A549 (cell line): ENCODE measurements at regions of chr1 and their contacts with region 1.

Region 1: DNA sequence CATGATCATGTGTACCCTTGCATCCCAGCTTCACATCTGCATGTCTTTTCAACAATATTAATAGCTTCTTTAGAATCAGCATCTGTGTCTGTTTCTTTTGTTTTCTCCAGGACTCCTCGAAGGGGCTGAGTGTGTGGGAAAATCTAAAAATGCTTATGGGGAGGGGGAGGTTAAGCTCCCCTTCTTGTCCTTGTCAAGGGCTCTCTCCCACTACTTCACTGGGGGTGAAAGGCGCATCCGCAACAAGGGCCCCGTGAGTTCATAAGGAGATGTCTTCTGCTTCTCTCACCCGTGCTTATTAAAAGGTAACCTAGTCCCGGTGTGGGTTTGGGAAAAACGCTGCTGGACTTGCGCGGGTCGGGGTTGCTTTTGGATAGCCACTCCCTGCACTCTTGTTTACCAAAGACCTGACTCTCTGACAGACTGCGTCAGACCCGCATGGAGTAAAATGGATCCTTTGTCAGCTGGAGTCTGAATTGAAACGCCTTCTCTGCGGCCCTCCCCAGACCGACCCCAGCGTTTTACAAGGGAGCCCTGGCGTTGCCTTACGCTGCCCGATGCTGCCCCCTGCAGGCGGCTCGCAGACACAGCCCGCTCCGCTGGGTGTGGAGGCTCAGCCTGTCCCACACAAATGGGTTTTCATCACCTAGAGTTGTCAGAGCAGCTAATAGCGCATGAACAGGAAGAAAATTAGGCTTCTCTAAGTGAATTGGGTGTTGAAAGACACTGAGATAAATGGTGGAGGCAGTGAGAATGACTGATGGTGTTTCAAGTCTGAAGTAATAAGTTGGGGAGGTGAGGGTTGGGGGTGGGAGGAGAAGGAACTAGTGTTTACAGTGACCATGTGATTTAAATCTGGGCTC is 53.8 kb downstream of the IER5 start:
- DNase-seq: peak; percentile 81 to 92
- ATAC-seq: peak; percentile 89 to 96
- H3K4me3 ChIP-seq: peak overlapping the region; percentile 19
- H3K27ac ChIP-seq: peak overlapping the region; percentile 77 to 92
- H3K4me1 ChIP-seq: peaks cover 36% of the 10 kb centered on the region
- CTCF ChIP-seq: peak; percentile 96
- EP300 ChIP-seq: no peak
- POLR2A ChIP-seq: no peak
- RAD21 ChIP-seq: peak; percentile 100

Region 2: GRCh38 chr1:180899262-180899661 is 243.1 kb before region 1 on chr1:
- CTCF ChIA-PET with region 1: interaction called, 19 read pairs
- POLR2A ChIA-PET with region 1: no interaction called
- DNase-seq: no peak
- ATAC-seq: no peak
- H3K4me3 ChIP-seq: no peak overlapping the region
- H3K27ac ChIP-seq: no peak overlapping the region
- H3K4me1 ChIP-seq: no peaks in the 10 kb centered on the region
- CTCF ChIP-seq: no peak
- EP300 ChIP-seq: no peak
- POLR2A ChIP-seq: no peak
- RAD21 ChIP-seq: no peak

Region 3: DNA sequence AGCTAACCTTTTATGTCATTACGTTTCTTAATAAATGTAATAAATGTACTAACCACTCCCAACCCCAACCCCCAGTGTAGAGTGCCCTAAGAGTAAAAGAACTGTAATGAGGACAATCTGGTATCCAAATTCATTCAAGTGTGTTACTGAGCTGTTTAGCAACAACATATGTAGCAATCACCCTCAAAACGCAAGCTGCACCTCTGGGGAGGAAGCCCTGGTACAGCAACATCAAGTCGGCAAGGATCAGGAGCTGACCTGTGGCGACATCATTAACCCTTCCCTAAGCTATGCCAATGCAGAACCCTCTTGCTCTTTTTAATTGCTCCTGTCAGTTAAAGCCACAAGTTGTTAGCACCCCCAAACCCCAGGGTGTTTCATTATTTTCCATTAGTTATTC is 166.8 kb before region 1 on chr1:
- CTCF ChIA-PET with region 1: interaction called, 26 read pairs
- POLR2A ChIA-PET with region 1: no interaction called
- DNase-seq: no peak
- ATAC-seq: no peak
- H3K4me3 ChIP-seq: no peak overlapping the region
- H3K27ac ChIP-seq: no peak overlapping the region
- H3K4me1 ChIP-seq: no peaks in the 10 kb centered on the region
- CTCF ChIP-seq: no peak
- EP300 ChIP-seq: no peak
- POLR2A ChIP-seq: no peak
- RAD21 ChIP-seq: no peak

Region 4: DNA sequence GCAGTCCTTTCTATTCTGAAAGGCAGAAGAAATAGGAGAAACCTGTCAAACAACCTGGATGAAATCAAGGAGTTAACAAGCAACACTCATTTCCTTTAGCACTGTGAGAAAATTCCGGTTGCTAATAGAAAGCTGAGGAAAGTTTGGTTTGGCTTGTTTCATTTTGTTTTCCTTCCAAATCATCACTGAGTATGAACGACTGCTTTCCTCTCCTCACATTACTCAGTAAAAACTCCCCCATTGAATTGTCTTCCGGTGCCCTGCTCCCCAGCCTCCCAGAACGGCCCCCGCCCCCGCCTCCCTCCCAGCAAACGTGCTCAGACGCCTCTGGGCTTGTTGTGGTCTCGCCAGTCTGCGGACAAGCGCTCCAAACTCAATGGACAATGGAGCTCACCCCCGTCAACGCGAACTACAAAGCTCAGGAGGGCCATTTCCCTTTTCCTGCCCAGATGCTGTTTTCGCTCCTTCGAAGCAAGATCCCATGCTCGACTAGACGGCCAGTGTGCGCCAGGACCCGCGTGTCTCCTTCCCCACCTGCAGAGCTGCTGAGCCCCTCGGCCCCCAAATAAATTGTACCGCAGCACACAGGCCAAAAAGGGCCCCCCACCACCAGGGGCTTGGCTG is 120.4 kb before region 1 on chr1:
- CTCF ChIA-PET with region 1: interaction called, 19 read pairs
- POLR2A ChIA-PET with region 1: no interaction called
- DNase-seq: peak; percentile 39 to 63
- ATAC-seq: peak; percentile 48 to 59
- H3K4me3 ChIP-seq: peak overlapping the region; percentile 76
- H3K27ac ChIP-seq: peak overlapping the region; percentile 88 to 98
- H3K4me1 ChIP-seq: peaks cover 11% of the 10 kb centered on the region; the same call in 2 of the 3 replicates
- CTCF ChIP-seq: no peak
- EP300 ChIP-seq: no peak
- POLR2A ChIP-seq: no peak
- RAD21 ChIP-seq: no peak

Region 5: GRCh38 chr1:181088079-181089016 is 54.0 kb before region 1 on chr1 and contains the start of gene IER5:
- CTCF ChIA-PET with region 1: interaction called, 774 read pairs
- POLR2A ChIA-PET with region 1: interaction called, 16 read pairs
- DNase-seq: peak; percentile 86 to 98
- ATAC-seq: peak; percentile 80 to 89
- H3K4me3 ChIP-seq: peak within 1 kb of the TSS; percentile 91
- H3K27ac ChIP-seq: peak within 1 kb of the TSS; percentile 80 to 97
- H3K4me1 ChIP-seq: peaks cover 56% of the 10 kb centered on the region
- CTCF ChIP-seq: no peak
- EP300 ChIP-seq: no peak; a peak in 1 of 5 replicates
- POLR2A ChIP-seq: peak; percentile 100
- RAD21 ChIP-seq: peak; percentile 40
- polyA plus RNA-seq, gene IER5: 21.2 and 26.8 TPM in 2 replicates

Region 6: DNA sequence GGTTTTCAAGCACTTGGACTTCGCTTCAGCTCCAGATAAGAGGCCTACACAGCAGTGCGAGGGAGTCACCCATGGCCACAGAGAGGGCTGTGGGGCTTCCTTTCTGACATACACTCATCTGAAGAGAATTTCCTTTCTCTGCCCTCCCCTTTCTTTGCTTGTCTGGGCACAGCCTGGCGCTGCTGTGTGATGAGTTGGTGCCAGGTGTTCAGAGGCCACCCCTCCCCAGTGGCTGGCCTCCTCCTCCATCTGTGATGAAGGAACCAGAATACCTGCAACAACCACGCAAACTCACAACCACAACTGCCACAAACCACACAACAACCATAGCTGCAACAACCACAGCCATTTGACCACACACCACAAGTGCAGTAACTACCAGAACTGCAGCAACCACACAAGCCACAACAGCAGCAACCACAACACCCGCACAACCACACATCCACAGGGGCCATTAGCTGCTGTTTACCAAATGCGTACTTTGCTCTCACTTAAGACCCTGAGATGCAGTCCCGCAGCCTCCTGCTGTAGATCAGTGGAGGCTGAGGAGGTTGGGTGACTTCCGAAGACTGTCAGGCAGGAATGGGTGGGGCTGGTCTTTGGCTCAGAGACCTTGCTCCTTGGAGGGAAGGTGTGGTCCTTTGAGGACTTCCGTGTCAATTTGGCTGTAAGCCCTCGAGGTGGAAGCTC is 17.3 kb after region 1 on chr1:
- CTCF ChIA-PET with region 1: interaction called, 37 read pairs
- POLR2A ChIA-PET with region 1: no interaction called
- DNase-seq: no peak
- ATAC-seq: peak in 1 of 2 experiments; percentile 56; a peak in 2 of 6 replicates
- H3K4me3 ChIP-seq: no peak overlapping the region
- H3K27ac ChIP-seq: 0 out of 6 replicates have a peak overlapping the region, but pooled peaks of 1 of the 2 experiments have one; percentile 3
- H3K4me1 ChIP-seq: peaks cover 4% of the 10 kb centered on the region; the same call in 2 of the 3 replicates
- CTCF ChIP-seq: no peak
- EP300 ChIP-seq: no peak
- POLR2A ChIP-seq: no peak
- RAD21 ChIP-seq: no peak

Region 7: DNA sequence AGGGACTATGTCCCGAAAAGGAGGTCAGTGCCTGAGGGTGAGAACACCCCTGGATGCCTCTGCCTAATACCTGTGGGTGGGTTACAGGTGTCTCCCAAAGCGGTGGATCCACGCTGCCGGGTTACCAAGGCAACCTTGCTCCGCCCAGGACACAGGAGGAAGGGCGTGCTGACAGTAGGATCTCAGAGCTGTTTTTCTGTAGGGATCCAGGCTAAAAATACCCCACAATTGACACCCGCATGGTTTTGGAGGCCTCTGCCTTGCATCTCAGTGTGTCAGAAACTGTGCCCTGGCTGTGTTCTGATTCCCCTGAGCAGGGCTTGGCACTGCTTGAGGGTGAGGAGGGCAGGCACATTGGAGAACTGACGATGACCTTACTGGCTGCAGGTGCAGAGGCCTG is 64.2 kb after region 1 on chr1:
- CTCF ChIA-PET with region 1: no interaction called
- POLR2A ChIA-PET with region 1: no interaction called
- DNase-seq: no peak
- ATAC-seq: no peak
- H3K4me3 ChIP-seq: no peak overlapping the region
- H3K27ac ChIP-seq: no peak overlapping the region
- H3K4me1 ChIP-seq: no peaks in the 10 kb centered on the region
- CTCF ChIP-seq: no peak
- EP300 ChIP-seq: no peak
- POLR2A ChIP-seq: no peak
- RAD21 ChIP-seq: no peak

Region 8: DNA sequence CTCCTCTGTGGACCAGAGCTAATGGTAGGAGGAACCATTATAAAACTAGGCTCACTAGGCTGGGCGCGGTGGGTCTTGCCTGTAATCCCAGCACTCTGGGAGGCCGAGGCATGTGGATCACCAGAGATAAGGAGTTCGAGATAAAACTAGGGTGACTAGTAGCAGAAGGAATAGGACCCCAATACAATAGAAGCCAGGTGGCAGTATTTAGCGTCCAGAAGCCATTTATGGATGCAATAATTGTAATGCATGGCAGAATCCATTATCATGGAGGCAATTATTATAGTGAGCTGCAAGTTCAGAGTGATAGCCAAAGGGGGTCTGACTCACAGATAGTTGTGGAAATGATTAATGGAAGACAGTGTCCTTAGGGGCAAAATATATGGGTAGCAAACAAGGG is 90.2 kb after region 1 on chr1:
- CTCF ChIA-PET with region 1: no interaction called
- POLR2A ChIA-PET with region 1: no interaction called
- DNase-seq: no peak
- ATAC-seq: no peak
- H3K4me3 ChIP-seq: no peak overlapping the region
- H3K27ac ChIP-seq: no peak overlapping the region
- H3K4me1 ChIP-seq: no peaks in the 10 kb centered on the region
- CTCF ChIP-seq: 0 out of 3 replicates have a peak, but pooled peaks have one; percentile 4
- EP300 ChIP-seq: no peak
- POLR2A ChIP-seq: no peak
- RAD21 ChIP-seq: peak in 1 of 2 experiments; percentile 18; a peak in 1 of 5 replicates